ENCODE measurements at regions of chr6 and their contacts with region 1.

Region 1: GRCh38 chr6:143510991-143511891 is at the start of gene FUCA2:
- DNase-seq: peak; percentile 77
- H3K4me3 Mint-ChIP-seq: peak within 1 kb of the TSS; percentile 94
- H3K27ac Mint-ChIP-seq: peak within 1 kb of the TSS; percentile 84
- H3K4me1 Mint-ChIP-seq: peaks cover 35% of the 10 kb centered on the region
- H3K27me3 Mint-ChIP-seq: no peaks in the 10 kb centered on the region
- total RNA-seq, gene FUCA2: 22.1 to 23.1 TPM

Region 2: GRCh38 chr6:143167224-143167623 is 344.0 kb before region 1 on chr6:
- CTCF ChIA-PET with region 1: no interaction called
- POLR2A ChIA-PET with region 1: no interaction called
- DNase-seq: no peak
- H3K4me3 Mint-ChIP-seq: no peak overlapping the region
- H3K27ac Mint-ChIP-seq: no peak overlapping the region
- H3K4me1 Mint-ChIP-seq: no peaks in the 10 kb centered on the region
- H3K27me3 Mint-ChIP-seq: no peaks in the 10 kb centered on the region

Region 3: DNA sequence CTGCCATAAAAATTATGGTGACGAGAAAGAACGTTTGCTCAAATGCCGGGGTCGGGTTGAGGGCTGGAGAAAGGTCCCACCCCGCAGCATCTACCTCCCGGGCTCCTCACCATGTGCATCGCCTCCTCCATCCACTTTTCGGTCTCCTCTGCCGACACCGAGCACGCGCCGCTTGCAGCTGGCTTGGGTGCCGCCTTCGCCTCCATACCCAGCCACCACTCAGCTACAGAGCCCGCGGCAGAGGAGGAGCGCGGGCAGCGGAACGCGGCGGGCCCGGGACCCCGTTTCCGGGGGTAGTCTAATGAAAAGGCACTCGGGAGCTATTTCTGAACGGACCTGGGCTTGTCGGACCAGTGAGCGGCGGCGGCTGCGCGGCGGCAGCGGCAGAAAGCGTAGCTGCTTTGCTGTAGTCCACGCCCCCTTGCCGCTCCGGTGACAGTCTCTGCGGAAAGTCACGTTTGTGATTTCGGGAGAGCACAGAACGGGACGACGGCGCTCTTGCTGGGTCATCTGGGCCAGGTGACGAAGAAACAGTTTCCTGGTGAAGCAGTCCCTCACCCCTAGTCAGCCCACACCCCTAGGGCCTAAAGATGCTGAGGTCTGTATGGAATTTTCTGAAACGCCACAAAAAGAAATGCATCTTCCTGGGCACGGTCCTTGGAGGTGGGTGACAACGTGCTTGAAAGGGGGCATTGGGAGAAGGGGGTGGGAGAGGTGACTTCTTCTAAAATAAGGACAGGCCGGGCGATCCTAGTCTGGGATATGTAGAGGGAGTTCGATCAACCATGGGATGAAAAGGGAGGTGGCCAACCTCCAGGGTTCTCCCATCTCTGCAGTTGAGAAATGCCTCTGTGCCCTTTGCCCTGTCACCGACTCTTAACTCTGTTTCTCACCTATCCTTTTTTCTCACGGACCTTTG is 60.5 kb before region 1 on chr6 and contains the starts of genes ADAT2 and PEX3:
- CTCF ChIA-PET with region 1: no interaction called
- POLR2A ChIA-PET with region 1: interaction called, 19 read pairs
- DNase-seq: peak; percentile 95
- H3K4me3 Mint-ChIP-seq: peak within 1 kb of the TSS; percentile 92
- H3K27ac Mint-ChIP-seq: peak within 1 kb of the TSS; percentile 92
- H3K4me1 Mint-ChIP-seq: peaks cover 40% of the 10 kb centered on the region
- H3K27me3 Mint-ChIP-seq: no peaks in the 10 kb centered on the region
- total RNA-seq, gene ADAT2: 19.4 to 20.1 TPM
- total RNA-seq, gene PEX3: 14.1 to 15.9 TPM

Region 4: DNA sequence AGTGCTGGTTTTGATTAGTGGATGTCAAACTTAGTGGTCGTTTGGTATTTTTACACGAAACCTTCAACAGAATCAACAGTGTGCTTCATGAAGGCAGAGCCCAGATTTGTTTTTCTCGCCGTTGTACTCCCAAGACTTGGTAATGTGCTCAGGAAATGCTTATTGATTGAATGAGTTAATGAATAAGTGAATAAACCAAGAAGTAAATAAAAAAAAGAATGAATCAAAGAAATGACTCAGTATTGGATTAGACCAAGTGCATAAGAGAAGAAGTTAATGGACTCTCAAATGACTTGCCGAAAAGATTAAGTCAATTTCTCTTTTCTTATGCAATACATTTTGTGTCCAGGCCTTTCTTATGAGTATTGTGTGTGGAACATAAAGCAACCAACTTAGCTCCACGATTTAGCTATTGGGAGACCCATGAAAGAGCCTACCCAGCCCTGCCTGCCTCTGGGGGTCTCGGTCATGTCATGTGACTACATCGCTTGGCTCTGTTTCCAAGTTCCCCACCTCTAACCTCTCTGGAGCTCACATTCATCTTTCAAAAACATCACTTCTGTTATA is 10.9 kb after region 1 on chr6:
- CTCF ChIA-PET with region 1: interaction called, 14 read pairs
- POLR2A ChIA-PET with region 1: interaction called, 8 read pairs
- DNase-seq: no peak
- H3K4me3 Mint-ChIP-seq: no peak overlapping the region
- H3K27ac Mint-ChIP-seq: no peak overlapping the region
- H3K4me1 Mint-ChIP-seq: peaks cover 8% of the 10 kb centered on the region
- H3K27me3 Mint-ChIP-seq: peaks cover 2% of the 10 kb centered on the region

Region 5: GRCh38 chr6:143529095-143529494 is 17.9 kb after region 1 on chr6:
- CTCF ChIA-PET with region 1: interaction called, 10 read pairs
- POLR2A ChIA-PET with region 1: interaction called, 7 read pairs
- DNase-seq: no peak
- H3K4me3 Mint-ChIP-seq: no peak overlapping the region
- H3K27ac Mint-ChIP-seq: no peak overlapping the region
- H3K4me1 Mint-ChIP-seq: peaks cover 11% of the 10 kb centered on the region
- H3K27me3 Mint-ChIP-seq: no peaks in the 10 kb centered on the region

Region 6: GRCh38 chr6:143536865-143537691 is 25.8 kb after region 1 on chr6:
- CTCF ChIA-PET with region 1: interaction called, 49 read pairs
- POLR2A ChIA-PET with region 1: interaction called, 68 read pairs
- DNase-seq: peak; percentile 71
- H3K4me3 Mint-ChIP-seq: peak overlapping the region; percentile 77
- H3K27ac Mint-ChIP-seq: peak overlapping the region; percentile 89
- H3K4me1 Mint-ChIP-seq: peaks cover 46% of the 10 kb centered on the region
- H3K27me3 Mint-ChIP-seq: no peaks in the 10 kb centered on the region

Region 7: DNA sequence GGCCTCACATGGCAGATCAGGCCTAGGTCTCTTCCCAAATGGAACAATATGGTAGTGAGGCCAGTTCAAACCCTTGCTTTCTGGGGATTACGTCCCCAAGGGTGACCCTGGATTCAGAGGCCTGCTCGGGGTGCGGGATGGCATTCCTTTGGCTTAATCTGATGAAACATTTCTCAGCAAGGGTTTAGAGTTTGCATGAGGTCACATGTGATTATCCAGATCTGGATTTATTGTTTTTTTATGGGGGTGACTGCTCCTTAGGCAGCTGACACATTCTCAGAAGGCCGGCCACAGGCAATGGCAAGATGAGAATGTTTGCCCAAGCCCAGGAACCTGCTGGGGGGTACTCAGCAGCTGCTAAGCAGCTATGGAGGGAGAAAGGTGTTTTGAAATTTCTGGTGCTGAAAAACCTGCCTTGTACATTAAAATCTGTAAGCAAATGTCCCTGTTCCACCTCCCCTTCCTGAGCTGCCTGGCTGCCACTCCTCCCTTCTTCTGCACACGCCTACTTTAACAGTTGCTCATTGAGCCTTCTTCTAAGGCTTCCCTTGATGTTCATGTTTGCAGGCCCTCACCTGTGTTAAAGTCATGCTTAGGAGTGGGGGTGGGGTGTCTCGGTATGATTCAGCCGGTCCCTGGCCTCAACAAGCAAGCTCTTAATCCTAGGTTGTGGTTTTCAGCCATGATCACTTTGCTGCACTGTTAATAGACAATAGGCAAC is 38.1 kb after region 1 on chr6:
- CTCF ChIA-PET with region 1: interaction called, 6 read pairs
- POLR2A ChIA-PET with region 1: interaction called, 10 read pairs
- DNase-seq: peak; percentile 55
- H3K4me3 Mint-ChIP-seq: no peak overlapping the region
- H3K27ac Mint-ChIP-seq: peak overlapping the region; percentile 42
- H3K4me1 Mint-ChIP-seq: peaks cover 83% of the 10 kb centered on the region
- H3K27me3 Mint-ChIP-seq: no peaks in the 10 kb centered on the region

Measured in activated CD4-positive, alpha-beta memory T cell treated with anti-CD3 and anti-CD28 coated beads, Interleukin-2, amount 10 ng/mL, durations not matched to agents 7 days and 5 days (primary cell).